ENCODE measurements at regions of chr7 and their contacts with region 1.

Region 1: GRCh38 chr7:75776295-75776971 is 4.4 kb upstream of the CCL26 start:
- DNase-seq: peak; percentile 50
- H3K4me3 Mint-ChIP-seq: no peak overlapping the region
- H3K27ac Mint-ChIP-seq: peak overlapping the region; percentile 78
- H3K4me1 Mint-ChIP-seq: peaks cover 36% of the 10 kb centered on the region
- H3K27me3 Mint-ChIP-seq: peaks cover 7% of the 10 kb centered on the region

Region 2: DNA sequence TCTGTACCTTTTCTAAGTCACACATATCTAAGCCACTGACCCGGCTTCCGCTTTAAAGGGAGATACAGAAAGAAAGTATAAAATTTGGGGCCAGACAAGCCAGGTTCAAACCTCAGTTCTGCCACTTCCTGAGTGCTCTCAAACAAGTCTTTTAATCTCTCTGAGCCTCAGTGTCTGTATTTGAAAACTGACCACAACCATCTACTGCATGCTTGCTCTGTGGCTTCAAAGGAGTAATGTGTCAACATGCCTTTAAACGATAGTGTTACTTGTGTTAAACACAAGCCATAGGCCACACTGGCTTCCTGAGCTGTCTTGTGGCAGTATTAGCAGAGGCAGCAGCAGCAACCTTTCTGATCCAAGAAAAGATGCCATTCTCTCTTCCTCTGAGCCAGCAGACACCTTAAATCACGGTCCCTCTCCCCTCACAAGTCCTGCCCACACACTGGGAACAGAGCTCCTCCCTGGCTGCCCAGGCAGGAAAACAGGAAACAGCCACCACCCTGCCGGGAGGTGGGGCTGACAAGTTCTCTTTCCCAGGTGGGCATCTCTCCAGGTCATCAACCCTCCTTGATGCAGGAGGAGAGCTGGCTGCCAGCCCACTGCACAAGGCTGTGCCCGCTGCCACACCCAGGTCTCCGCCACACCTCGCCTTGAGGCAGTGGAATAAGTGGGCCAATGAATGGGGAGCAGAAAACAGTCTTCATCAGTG is 48.4 kb before region 1 on chr7:
- intact Hi-C with region 1: no loop called
- DNase-seq: peak; percentile 18
- H3K4me3 Mint-ChIP-seq: no peak overlapping the region
- H3K27ac Mint-ChIP-seq: peak overlapping the region; percentile 28
- H3K4me1 Mint-ChIP-seq: peaks cover 15% of the 10 kb centered on the region
- H3K27me3 Mint-ChIP-seq: no peaks in the 10 kb centered on the region

Region 3: GRCh38 chr7:75842836-75843446 is 66.5 kb after region 1 on chr7:
- intact Hi-C with region 1: loop called (anchors 2 kb)
- DNase-seq: no peak
- H3K4me3 Mint-ChIP-seq: peak overlapping the region; percentile 62
- H3K27ac Mint-ChIP-seq: peak overlapping the region; percentile 97
- H3K4me1 Mint-ChIP-seq: peaks cover 14% of the 10 kb centered on the region
- H3K27me3 Mint-ChIP-seq: no peaks in the 10 kb centered on the region

Measured in activated T-helper 2 cell treated with anti-CD3 and anti-CD28 coated beads, Interferon-gamma antibody, Interleukin-2, Interleukin-4, amounts not matched to agents 10 μg/mL and 5 μg/mL and 100 μg/mL, durations not matched to agents 14 hours and 24 hours and 36 hours (primary cell).